Activated CD4-positive, alpha-beta T cell treated with anti-CD3 and anti-CD28 coated beads, Interleukin-2, amount 10 ng/mL, durations not matched to agents 24 days and 14 days (primary cell): ENCODE measurements at regions of chr5 and their contacts with region 1.

Region 1: GRCh38 chr5:175663186-175664184 is 5.6 kb downstream of the HRH2 start:
- DNase-seq: no peak
- H3K4me3 Mint-ChIP-seq: peak overlapping the region; percentile 9
- H3K27ac Mint-ChIP-seq: no peak overlapping the region
- H3K4me1 Mint-ChIP-seq: peaks cover 61% of the 10 kb centered on the region
- H3K27me3 Mint-ChIP-seq: no peaks in the 10 kb centered on the region

Region 2: DNA sequence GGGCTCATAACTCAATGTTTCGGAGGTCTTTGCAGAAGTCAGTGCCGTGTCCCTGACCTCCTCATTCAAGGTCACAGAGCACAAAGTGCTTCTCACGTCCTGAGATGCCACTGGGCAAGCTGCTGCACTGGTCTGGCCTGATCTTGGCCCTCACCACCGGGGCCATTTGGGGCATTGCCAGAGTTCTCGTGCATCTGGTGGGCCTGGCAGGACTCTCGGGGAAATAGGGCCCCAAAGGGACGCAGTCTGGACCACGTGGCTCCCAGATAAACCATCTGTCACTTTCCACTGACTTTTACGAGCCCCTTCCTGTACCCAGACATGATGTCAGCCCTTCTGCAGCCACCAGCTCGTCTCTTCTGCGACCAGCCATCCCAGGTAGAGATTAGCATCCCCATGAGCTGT is 49.2 kb after region 1 on chr5:
- intact Hi-C with region 1: loop called (anchors 5 kb)
- DNase-seq: no peak
- H3K4me3 Mint-ChIP-seq: no peak overlapping the region
- H3K27ac Mint-ChIP-seq: no peak overlapping the region
- H3K4me1 Mint-ChIP-seq: peaks cover 7% of the 10 kb centered on the region
- H3K27me3 Mint-ChIP-seq: no peaks in the 10 kb centered on the region

Region 3: DNA sequence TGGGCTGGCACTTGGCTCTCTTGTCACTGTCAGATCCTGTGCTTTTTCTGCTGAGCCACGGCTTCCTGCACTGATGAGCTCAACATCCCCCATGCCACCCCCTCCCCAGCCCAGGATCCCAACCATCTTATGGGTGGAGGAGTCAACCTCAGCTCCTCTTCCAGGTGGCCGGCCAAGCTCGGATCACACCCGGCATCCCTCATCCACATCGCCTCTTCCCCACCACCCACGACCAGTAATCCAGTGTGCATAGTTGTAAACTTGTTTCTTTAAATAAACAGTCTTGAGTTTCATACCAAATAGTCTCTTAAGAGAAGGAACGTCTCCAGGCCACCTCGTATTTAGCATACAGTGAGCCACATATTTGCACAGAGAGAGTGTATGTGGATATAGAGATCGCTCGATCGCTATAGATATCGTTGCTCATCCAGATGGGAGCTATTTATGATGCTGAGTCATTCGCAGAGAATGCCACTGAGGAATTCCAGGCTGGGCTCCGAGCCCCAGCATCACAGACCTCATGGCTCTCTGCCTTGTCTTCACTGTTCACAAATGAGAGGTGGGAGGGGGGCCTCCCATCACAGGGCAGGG is 146.1 kb after region 1 on chr5:
- intact Hi-C with region 1: no loop called
- DNase-seq: no peak
- H3K4me3 Mint-ChIP-seq: no peak overlapping the region
- H3K27ac Mint-ChIP-seq: no peak overlapping the region
- H3K4me1 Mint-ChIP-seq: no peaks in the 10 kb centered on the region
- H3K27me3 Mint-ChIP-seq: peaks cover 2% of the 10 kb centered on the region